Colonic mucosa (tissue), 4 donors: ENCODE measurements at regions of chr1 and their contacts with region 1.

Region 1: DNA sequence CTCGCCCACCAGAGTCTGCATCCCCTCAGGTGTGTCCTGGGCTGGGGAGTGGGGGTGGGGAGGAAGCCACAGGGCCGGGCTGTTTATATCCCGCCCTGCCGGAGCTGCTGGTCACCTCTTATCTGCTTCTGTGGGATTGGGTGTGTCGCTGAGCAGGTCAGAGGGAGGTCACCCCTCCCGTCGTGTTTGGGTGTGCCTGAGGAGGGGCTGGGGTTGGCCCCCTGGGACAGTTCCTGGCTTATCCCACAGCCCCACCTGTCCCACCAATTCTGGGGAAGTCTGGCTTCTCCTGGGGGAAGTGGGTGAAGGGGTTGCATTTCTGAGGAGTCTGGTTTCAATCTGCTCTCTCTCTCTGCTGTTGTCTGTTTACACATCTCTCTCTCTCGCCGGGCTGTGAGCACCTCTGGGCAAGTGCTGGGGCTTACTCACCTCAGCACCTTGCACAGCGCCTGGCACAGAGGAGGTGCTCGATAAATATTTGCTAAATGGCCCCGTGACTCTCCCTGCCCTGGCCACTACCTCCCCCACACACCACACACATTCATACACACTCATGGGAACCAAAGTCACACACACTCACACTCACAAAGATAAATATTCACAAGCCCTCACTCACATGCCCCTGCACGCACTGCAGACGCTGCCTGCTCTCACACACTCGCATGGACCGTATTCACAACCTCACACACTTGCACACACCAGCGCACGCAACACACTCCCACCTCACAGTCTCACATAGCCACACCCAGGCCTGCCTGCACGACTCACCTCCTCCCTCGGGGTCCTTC is 8.3 kb downstream of the ELF3 start:
- DNase-seq: peak; percentile 89
- H3K4me3 ChIP-seq: peak overlapping the region; percentile 2
- H3K27ac ChIP-seq: peak overlapping the region; percentile 93
- H3K4me1 ChIP-seq: peaks cover 5% of the 10 kb centered on the region
- H3K27me3 ChIP-seq: no peaks in the 10 kb centered on the region
- CTCF ChIP-seq: no peak

Region 2: GRCh38 chr1:202056644-202057461 is 38.2 kb after region 1 on chr1:
- intact Hi-C with region 1: no loop called
- DNase-seq: peak; percentile 94
- H3K4me3 ChIP-seq: no peak overlapping the region
- H3K27ac ChIP-seq: peak overlapping the region; percentile 85
- H3K4me1 ChIP-seq: no peaks in the 10 kb centered on the region
- H3K27me3 ChIP-seq: no peaks in the 10 kb centered on the region
- CTCF ChIP-seq: no peak

Region 3: DNA sequence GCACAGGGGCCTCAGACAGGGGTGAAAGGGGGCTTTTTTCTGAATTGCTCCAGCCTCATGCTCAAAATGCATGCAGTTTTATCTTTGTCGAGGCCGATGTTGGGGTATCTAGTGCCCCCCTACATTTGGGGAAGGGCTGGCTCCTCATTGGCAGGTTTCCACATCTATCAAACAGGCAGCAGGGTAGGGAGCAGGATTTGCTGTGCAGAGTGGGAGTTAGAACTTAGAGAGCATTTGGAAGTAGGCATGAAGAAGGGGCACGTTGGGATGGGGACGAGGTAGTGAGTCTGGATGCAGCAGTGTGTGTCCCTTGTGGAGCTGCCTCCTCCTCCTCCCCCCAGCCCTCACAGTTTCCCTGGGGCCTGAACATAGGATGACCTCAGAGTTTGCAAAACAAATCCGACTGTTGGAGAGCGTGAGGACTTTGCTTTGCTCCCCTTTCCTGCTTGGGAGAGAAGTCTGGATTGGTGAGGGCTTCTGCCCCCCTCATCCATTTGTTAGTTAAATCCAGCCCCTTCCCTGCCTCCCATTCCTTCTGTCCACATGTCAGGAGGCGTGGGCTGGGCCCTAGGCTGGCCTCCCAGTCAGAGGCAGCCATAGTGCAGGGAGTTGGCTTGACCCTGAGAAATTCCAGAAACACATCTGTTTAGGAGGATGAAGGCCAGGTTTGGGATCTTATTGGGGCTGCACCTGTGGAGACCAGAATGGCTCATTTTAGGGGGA is 67.2 kb after region 1 on chr1:
- intact Hi-C with region 1: loop called (anchors 2 kb)
- DNase-seq: peak; percentile 68
- H3K4me3 ChIP-seq: no peak overlapping the region
- H3K27ac ChIP-seq: peak overlapping the region; percentile 88
- H3K4me1 ChIP-seq: no peaks in the 10 kb centered on the region
- H3K27me3 ChIP-seq: no peaks in the 10 kb centered on the region
- CTCF ChIP-seq: no peak